Caco-2 (cell line): ENCODE measurements at regions of chr1 and their contacts with region 1.

Region 1: DNA sequence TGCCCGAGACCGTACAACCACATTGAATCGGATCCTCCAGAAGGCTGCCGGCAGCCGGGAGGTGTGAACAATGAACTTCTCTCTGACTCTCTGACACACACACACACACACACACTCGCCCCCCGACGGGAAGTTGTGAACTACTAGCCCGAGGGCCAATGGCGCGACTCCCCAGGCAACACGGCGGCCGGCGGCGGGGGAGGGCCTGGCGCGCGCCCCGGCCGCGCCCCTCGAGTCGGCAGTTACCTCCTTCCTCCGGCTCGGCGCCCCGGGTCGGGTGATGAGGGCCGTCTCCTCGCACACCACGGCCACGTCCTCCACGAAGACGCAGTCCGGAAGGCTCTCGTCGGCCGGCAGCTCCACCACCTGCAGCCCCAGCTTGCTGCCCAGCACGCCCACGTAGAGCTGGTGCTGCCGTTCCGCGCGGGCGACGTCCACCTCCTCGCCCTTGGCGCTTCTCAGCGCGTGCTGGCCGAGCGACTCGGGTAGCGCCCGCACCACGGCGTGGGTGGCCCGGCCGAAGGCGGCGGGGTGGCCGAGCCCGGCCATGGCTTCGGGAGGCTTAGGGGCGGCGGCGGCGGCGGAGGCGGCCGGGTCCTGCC is 361 bp downstream of the DDAH1 start:
- DNase-seq: peak; percentile 59 to 66
- H3K4me3 ChIP-seq: peak overlapping the region; percentile 88
- H3K4me3 Mint-ChIP-seq: peak overlapping the region; percentile 88
- H3K27ac Mint-ChIP-seq: peak overlapping the region; percentile 84
- H3K4me1 ChIP-seq: peaks cover 38% of the 10 kb centered on the region
- H3K4me1 Mint-ChIP-seq: peaks cover 24% of the 10 kb centered on the region
- H3K27me3 ChIP-seq: no peaks in the 10 kb centered on the region; the same call in 1 of the 2 replicates
- H3K27me3 Mint-ChIP-seq: no peaks in the 10 kb centered on the region
- CTCF ChIP-seq: no peak

Region 2: GRCh38 chr1:84619383-84620102 is 845.1 kb before region 1 on chr1:
- CTCF ChIA-PET with region 1: no interaction called
- POLR2A ChIA-PET with region 1: no interaction called
- intact Hi-C with region 1: no loop called
- DNase-seq: no peak
- H3K4me3 ChIP-seq: no peak overlapping the region
- H3K4me3 Mint-ChIP-seq: no peak overlapping the region
- H3K27ac Mint-ChIP-seq: no peak overlapping the region
- H3K4me1 ChIP-seq: no peaks in the 10 kb centered on the region
- H3K4me1 Mint-ChIP-seq: no peaks in the 10 kb centered on the region
- H3K27me3 ChIP-seq: no peaks in the 10 kb centered on the region
- H3K27me3 Mint-ChIP-seq: no peaks in the 10 kb centered on the region
- CTCF ChIP-seq: no peak

Region 3: GRCh38 chr1:85328713-85329376 is 135.8 kb before region 1 on chr1:
- CTCF ChIA-PET with region 1: no interaction called
- POLR2A ChIA-PET with region 1: no interaction called
- intact Hi-C with region 1: loop called (anchors 5 kb)
- DNase-seq: peak; percentile 70 to 74
- H3K4me3 ChIP-seq: no peak overlapping the region
- H3K4me3 Mint-ChIP-seq: peak overlapping the region; percentile 31
- H3K27ac Mint-ChIP-seq: peak overlapping the region; percentile 89
- H3K4me1 ChIP-seq: peaks cover 58% of the 10 kb centered on the region
- H3K4me1 Mint-ChIP-seq: peaks cover 33% of the 10 kb centered on the region
- H3K27me3 ChIP-seq: no peaks in the 10 kb centered on the region
- H3K27me3 Mint-ChIP-seq: no peaks in the 10 kb centered on the region
- CTCF ChIP-seq: no peak

Region 4: GRCh38 chr1:85344256-85344694 is 120.3 kb before region 1 on chr1:
- CTCF ChIA-PET with region 1: no interaction called
- POLR2A ChIA-PET with region 1: no interaction called
- intact Hi-C with region 1: loop called (anchors 2 kb)
- DNase-seq: peak; percentile 50 to 53
- H3K4me3 ChIP-seq: no peak overlapping the region
- H3K4me3 Mint-ChIP-seq: no peak overlapping the region
- H3K27ac Mint-ChIP-seq: peak overlapping the region; percentile 32
- H3K4me1 ChIP-seq: peaks cover 16% of the 10 kb centered on the region; the same call in 1 of the 2 replicates
- H3K4me1 Mint-ChIP-seq: peaks cover 21% of the 10 kb centered on the region
- H3K27me3 ChIP-seq: no peaks in the 10 kb centered on the region
- H3K27me3 Mint-ChIP-seq: no peaks in the 10 kb centered on the region
- CTCF ChIP-seq: peak in 1 of 2 experiments; percentile 78

Region 5: DNA sequence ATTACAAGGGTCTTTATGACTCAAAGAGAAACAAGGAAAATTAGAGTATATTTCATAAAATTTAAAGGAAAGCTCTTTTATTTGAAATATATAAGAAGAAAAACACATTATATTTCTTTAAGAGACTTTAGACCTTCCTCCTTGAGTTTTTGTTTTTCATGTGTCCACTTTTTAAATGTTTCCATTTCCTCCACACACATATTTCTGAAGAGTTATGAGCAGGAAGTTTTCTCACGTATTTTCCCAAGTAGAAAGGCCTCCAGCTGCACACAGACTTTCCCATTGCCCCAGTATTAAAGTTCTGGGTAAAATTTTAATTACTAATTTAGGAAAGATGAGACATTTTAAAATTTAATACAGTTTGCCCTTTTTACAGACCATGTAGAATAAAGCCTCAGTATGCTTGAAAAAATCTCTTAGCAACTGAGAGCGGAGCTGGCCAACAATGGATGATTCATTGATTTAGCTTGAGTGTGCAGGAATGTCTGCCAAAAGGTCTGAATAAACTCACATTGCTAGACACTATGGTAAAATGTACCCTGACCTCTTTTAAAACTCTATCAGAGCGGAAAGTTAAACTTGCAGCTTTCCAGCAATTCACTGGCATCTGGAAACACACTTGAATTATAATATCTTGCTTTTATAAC is 57.6 kb before region 1 on chr1:
- CTCF ChIA-PET with region 1: no interaction called
- POLR2A ChIA-PET with region 1: no interaction called
- intact Hi-C with region 1: loop called (anchors 5 kb)
- DNase-seq: no peak
- H3K4me3 ChIP-seq: no peak overlapping the region
- H3K4me3 Mint-ChIP-seq: no peak overlapping the region
- H3K27ac Mint-ChIP-seq: no peak overlapping the region
- H3K4me1 ChIP-seq: no peaks in the 10 kb centered on the region
- H3K4me1 Mint-ChIP-seq: peaks cover 7% of the 10 kb centered on the region
- H3K27me3 ChIP-seq: no peaks in the 10 kb centered on the region
- H3K27me3 Mint-ChIP-seq: no peaks in the 10 kb centered on the region
- CTCF ChIP-seq: no peak